ENCODE measurements at regions of chr5 and their contacts with region 1.

Region 1: DNA sequence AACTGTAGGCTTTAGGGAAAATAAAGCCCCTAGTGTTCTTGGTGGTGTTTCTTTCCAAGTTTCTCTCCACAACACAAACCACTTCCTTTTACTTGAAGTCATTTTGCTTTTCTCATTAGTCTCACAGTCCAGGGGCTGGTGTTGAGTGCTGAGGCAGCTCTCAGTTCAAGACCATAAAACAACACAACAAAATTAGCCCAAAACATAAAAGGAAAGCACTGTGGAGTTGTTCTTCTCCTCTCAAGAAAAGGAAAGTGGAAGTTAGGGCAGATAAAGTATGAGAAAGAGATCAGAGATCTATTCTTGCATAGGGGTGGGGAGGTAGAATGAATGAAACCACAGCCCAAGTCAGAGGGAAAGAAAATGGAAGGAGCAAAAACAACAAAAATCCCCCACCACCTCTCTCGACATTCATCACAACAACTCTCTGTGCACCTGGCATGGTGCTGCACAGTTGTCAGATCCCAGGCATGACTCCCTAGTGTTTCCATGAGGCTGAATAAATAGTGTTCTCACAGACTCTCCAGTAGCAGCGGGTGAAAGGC is 569.9 kb downstream of the RAB3C start:
- DNase-seq: no peak
- ATAC-seq: peak in 2 of 4 donors; percentile 31 to 48
- H3K4me3 ChIP-seq: no peak overlapping the region
- H3K27ac ChIP-seq: peak overlapping the region in 1 of 12 donors; percentile 6
- H3K4me1 ChIP-seq: peaks cover 0 to 28% (median 9%) of the 10 kb centered on the region in 12 donors
- H3K27me3 ChIP-seq: no peaks in the 10 kb centered on the region
- CTCF ChIP-seq: no peak
- POLR2A ChIP-seq: no peak

Region 2: DNA sequence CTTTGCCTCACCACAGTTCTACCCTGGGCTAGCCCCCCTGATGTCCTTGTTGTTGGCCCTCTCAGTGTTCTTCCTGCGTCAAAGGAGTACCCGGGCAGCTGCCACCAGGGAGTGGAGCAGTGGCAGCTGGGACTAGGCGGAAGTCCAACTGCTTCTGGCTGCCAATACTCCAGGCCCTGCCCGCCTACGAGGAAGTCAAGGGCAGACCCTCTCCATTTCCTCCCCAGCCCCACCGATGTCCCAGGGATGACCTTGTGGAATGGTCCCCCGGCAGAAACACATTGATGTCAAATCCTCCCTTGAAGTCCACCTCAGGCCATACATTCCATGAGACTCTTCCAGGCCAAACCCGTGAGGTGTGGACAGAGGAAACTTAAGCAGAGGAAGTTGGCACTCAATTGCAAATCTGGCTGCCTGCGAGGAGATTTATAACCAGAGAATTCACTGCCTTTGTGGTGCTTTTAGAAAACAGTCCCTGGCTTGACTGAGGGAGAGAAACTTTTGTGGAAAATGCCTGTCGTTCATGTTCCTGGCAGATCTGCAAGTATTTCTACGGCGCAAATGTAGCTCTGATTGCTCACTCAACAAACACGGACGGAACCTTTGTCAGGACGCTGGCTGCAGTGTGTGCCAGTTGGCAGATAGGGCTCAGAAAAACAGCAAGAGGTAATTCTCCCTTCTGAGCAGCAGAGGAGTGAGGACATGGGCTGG is 230.2 kb before region 1 on chr5:
- intact Hi-C with region 1: loop called in 1 of 10 experiments (anchors 10 kb)
- DNase-seq: peak; percentile 54 to 90 (median 79)
- ATAC-seq: peak; percentile 94 to 97 (median 96)
- H3K4me3 ChIP-seq: peak overlapping the region in 1 of 12 donors; percentile 9
- H3K27ac ChIP-seq: peak overlapping the region; percentile 69 to 93 (median 82)
- H3K4me1 ChIP-seq: peaks cover 0 to 29% (median 7%) of the 10 kb centered on the region in 12 donors
- H3K27me3 ChIP-seq: no peaks in the 10 kb centered on the region
- CTCF ChIP-seq: peak in 1 of 12 donors; percentile 6
- POLR2A ChIP-seq: peak in 1 of 2 donors; percentile 17

Region 3: DNA sequence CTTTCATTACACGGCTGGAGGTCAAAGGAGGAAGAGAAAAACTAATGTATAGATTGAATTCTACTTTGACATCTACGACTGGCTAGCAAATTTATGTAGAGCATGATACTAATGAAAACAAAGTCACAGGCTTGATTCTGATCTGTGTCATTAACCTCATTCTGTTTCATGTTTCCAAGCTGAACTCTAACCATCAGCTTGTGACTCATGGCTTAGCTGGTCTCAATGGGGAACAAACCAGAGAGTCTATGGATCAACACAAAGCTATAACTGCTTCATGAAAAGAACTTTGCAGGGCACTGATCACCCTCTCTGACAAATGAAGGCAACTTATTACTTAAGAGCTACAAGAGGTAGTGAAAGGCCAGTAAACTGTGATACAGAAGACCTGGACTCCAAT is 764.3 kb after region 1 on chr5:
- intact Hi-C with region 1: no loop called
- DNase-seq: no peak
- ATAC-seq: no peak
- H3K4me3 ChIP-seq: no peak overlapping the region
- H3K27ac ChIP-seq: no peak overlapping the region
- H3K4me1 ChIP-seq: no peaks in the 10 kb centered on the region
- H3K27me3 ChIP-seq: no peaks in the 10 kb centered on the region
- CTCF ChIP-seq: no peak
- POLR2A ChIP-seq: no peak

Measured in heart left ventricle (tissue), 16 donors.